Left ventricle myocardium superior (tissue), 1 donor: ENCODE measurements at regions of chr15 and their contacts with region 1.

Region 1: DNA sequence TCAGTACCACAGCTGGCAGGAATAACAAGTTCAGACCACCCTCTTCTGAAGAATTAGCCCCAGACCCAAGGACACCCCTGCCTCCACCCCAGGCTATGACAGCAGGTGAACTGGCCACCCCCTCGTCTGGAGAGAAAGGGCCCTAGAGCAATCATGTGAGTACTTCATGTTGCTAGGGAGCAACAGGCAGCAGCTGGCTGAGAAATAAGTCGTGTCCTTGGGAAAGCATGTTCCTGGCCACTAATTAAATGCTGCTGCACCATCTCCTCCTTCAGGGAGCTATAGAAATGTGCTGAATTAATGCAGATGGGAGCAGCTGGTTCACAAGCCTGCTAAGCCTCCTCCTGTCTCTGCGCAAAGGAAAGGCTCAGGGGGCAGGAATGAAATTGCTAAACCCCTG is 31.5 kb downstream of the MRPS11 start:
- DNase-seq: peak; percentile 36
- ATAC-seq: peak; percentile 73

Region 2: GRCh38 chr15:88187153-88187552 is 311.8 kb before region 1 on chr15:
- intact Hi-C with region 1: no loop called
- DNase-seq: peak; percentile 33
- ATAC-seq: no peak

Region 3: GRCh38 chr15:88284318-88284998 is 214.5 kb before region 1 on chr15:
- intact Hi-C with region 1: no loop called
- DNase-seq: peak; percentile 28
- ATAC-seq: no peak

Region 4: DNA sequence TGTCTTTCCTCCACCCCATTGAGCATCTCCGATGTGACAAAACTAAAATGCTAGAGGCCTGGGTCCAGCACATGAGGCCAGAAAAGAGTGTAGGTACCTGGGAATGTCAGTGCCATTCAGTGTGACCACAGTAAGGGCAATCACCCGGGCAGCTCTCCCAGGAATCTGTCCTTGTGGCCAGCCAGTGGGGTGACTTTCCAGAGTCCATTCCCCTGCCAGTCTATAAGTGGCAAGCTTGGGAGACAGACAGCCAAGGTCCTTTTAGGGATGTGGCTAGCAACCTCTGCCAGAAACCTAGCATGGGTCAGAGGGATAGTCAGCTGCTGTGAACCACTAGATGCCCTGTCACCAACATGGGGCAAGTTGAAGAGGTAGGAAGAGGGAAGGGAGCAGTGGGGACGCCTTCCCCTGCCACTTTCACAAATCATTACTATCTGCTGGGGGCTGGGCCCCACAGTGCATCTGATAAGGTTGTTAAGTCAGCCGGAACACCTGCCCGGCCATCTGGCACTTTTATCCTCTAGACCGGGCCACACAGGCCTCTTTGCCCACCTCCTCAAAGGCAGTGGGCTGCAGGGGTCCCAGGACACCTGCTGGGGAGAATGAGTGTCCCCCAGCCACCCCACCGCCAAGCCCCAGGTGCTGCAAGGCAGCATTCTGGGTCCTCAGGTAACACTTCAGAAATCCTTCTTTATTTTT is 72.3 kb after region 1 on chr15:
- intact Hi-C with region 1: loop called (anchors 2 kb)
- DNase-seq: peak; percentile 76
- ATAC-seq: peak; percentile 93